GM13976 (cell line): ENCODE measurements at regions of chr3 and their contacts with region 1.

Region 1: DNA sequence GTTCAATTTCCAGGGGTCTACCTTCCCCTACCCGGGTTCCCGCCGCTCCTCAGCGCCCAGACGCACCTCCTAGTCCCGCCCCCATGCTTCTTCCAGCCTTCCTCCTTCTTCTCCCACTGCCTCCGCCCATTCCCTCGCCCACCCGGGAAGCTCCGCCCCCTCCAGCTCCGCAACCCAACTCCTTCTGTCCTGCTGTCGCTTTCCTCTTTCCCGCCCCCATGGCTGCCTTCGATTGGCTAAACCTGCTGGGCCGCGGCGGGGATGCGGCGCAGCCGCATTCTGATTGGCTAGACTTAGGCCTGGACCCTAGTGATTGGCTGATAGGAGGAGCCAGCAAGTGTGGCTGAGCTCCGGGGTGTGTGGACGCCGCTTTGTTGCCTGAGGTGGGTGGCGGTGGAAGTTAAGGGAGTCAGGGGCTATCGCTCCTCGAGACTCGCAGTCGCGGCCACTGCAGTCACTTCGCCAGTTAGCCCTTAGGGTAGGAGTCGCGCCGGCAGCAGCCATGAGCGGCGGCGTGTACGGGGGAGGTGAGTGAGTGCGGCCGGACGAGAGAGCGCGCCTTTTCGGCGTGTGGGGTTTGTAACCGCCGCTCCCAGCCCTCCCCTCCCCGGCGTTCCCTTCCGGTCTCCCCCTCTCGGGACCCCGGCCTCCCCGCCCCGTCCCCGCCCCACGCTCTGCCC is at the start of gene ACTL6A:
- DNase-seq: peak; percentile 98
- CTCF ChIP-seq: no peak

Region 2: DNA sequence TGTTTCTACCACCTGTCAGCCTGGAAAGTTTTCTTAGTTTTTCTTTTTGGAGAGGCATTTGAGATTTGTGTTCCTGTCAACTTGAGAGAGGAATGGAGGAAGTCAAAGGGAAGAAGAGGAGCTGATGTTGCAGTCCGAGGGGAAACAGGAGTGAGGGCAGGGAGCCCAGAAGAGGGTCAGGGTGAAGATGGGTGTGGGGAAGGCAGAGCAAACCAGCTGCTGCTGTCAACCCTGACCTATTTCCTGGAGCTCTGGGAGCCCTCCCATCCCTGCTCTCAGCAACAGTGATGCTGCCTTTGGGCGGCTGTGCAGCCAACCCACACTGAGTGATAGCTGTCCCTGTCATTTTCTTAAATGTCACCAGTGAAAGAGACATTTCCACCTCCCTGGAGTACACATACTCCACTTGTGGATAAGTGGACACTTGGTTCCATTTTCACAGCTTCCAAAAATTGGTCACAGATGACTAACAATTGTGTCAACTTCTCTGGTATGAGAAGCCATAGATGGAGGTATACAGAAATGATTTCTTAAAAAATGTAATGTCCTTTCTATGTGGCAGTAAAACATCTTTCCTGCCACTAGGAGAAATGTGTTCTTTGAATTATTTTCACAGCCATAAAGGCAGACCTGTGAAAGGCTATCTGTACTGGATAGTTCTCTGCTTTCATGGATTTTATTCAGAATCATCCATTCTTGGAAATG is 1809.1 kb before region 1 on chr3:
- in situ Hi-C with region 1: no loop called
- DNase-seq: no peak
- CTCF ChIP-seq: no peak

Region 3: DNA sequence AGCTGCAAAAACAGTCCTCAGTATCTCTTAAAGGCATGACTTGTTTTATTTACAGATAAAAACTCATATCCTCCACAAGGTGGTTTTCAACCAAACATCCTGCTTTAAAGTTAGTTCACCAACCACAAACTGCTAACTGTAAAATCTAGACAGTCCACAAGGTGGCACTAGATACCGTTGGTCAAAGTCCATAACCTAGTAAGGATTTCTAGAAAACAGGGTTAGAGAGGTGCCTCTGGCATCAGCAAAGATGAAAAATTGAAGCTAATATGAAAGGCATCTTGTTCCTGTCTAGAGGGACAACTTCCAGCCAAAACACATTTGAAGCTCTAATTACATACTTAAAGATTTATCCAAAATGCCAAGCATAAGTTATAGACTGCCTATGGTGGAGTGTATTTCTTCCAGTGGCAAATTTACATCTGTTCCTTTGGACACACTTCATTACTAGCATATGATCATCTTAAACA is 547.1 kb before region 1 on chr3:
- in situ Hi-C with region 1: loop called (anchors 25 kb)
- DNase-seq: peak; percentile 42
- CTCF ChIP-seq: peak; percentile 72

Region 4: DNA sequence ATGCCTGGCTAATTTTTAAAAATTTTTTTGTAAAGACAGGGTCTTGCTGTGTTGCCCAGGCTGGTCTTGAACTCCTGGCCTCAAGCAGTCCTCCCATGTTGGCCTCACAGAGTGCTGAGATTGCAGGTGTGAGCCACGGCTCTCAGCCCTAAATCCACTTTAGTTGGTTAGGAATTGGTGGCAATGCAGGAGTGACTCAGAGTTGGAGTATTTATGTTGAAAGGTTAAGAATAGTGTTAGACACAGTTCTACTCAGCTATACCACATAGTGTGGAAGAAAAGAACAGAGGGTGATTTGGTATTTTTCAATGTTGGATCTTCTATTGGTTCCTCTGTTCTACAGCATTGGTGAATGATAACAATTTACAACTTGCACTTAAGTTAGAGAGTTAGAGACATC is 232.3 kb before region 1 on chr3:
- in situ Hi-C with region 1: loop called (anchors 10 kb)
- DNase-seq: no peak
- CTCF ChIP-seq: no peak

Region 5: DNA sequence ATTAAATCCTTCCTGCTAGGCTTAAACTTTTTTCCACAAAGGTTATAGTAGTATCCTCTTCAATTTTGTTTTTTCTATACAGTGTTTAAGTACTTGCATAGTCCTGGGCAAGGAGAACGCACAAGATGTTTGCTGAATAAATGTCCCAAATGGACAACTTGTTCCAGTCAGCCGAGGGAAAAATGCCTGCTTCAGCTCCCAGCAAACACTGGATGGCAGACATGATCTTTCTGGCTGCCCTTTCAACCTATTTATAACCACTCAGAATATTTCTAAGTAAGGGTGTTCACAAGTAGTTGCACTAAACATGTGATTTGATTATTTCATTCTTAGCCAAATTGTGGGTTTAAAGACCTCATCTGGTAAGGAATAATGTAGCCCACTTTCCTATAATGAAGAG is 141.2 kb before region 1 on chr3:
- in situ Hi-C with region 1: loop called (anchors 25 kb)
- DNase-seq: no peak
- CTCF ChIP-seq: no peak